CD4-positive, alpha-beta T cell (primary cell): ENCODE measurements at regions of chr6 and their contacts with region 1.

Region 1: GRCh38 chr6:106512048-106512967 is 117.0 kb downstream of the RTN4IP1 start:
- DNase-seq: peak; percentile 66 to 91 (median 72)
- ATAC-seq: peak; percentile 73
- H3K4me3 ChIP-seq: peak overlapping the region; percentile 99
- H3K4me3 Mint-ChIP-seq: peak overlapping the region; percentile 96
- H3K27ac ChIP-seq: peak overlapping the region; percentile 95 to 96
- H3K27ac Mint-ChIP-seq: peak overlapping the region; percentile 97
- H3K4me1 ChIP-seq: peaks cover 48% of the 10 kb centered on the region
- H3K4me1 Mint-ChIP-seq: peaks cover 55% of the 10 kb centered on the region
- H3K27me3 ChIP-seq: no peaks in the 10 kb centered on the region
- H3K27me3 Mint-ChIP-seq: peaks cover 12% of the 10 kb centered on the region
- CTCF ChIP-seq: peak; percentile 67

Region 2: DNA sequence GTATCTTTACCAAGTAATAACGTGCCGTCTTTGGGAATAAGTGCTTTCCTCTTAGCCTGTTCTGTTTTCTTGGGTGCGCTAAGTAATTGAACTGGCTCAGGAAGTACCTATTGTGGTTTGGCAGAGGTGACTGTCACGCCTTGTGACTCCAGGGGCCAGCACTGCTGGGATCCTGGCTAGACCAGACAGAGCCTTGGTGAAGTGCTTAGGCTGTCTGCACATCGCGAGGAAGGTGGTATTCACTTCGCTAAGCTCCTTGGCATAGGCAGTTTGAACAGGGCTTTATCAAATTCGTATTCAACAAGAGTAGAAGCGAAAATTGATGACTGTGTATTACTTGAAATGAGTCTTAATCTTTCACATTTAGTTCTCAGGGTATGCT is 408.6 kb before region 1 on chr6:
- CTCF ChIA-PET with region 1: no interaction called
- POLR2A ChIA-PET with region 1: no interaction called
- intact Hi-C with region 1: loop called in 1 of 2 experiments (anchors 10 kb)
- DNase-seq: peak in 13 of 14 experiments; percentile 20 to 86 (median 44)
- ATAC-seq: peak; percentile 62
- H3K4me3 ChIP-seq: peak overlapping the region; percentile 72
- H3K4me3 Mint-ChIP-seq: peak overlapping the region; percentile 90
- H3K27ac ChIP-seq: peak overlapping the region; percentile 19 to 52
- H3K27ac Mint-ChIP-seq: peak overlapping the region; percentile 95
- H3K4me1 ChIP-seq: peaks cover 59% of the 10 kb centered on the region
- H3K4me1 Mint-ChIP-seq: peaks cover 77% of the 10 kb centered on the region
- H3K27me3 ChIP-seq: no peaks in the 10 kb centered on the region
- H3K27me3 Mint-ChIP-seq: no peaks in the 10 kb centered on the region
- CTCF ChIP-seq: no peak

Region 3: DNA sequence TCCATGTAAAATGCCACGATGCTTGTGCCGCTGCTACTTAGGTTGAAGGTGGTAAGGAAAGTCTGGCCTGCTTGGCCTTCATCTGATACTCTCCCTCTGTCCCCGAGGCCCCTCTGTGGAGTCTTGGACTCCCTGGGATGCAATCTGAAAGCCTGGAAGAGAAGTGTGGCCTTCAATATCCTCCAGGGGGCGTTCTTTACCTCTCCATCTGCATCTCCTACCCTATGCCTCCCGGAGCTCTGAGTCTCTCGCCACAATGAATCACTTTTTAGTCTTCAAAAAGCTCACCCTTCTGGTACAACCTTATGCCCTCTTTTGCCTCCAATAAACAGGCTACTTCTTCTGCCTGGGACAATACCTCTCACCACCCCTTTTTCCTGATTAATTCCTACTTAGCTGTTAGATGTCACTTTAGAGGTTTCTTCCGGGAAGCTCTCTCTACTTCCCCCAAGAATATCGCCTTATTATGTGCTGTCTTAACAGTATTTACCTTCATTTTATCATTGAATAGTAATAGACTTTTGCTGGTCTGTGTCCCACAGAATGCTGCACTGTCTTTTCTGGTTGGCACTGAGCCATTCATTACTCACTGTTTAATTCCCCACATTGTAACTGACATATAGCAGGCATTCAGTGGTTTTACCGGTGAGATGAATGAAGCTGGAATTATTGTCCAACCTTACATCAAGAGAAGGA is 172.8 kb before region 1 on chr6:
- CTCF ChIA-PET with region 1: no interaction called
- POLR2A ChIA-PET with region 1: no interaction called
- intact Hi-C with region 1: loop called in 1 of 2 experiments (anchors 5 kb)
- DNase-seq: peak in 12 of 14 experiments; percentile 4 to 74 (median 32)
- ATAC-seq: peak; percentile 80
- H3K4me3 ChIP-seq: no peak overlapping the region
- H3K4me3 Mint-ChIP-seq: no peak overlapping the region
- H3K27ac ChIP-seq: no peak overlapping the region
- H3K27ac Mint-ChIP-seq: no peak overlapping the region
- H3K4me1 ChIP-seq: peaks cover 3% of the 10 kb centered on the region
- H3K4me1 Mint-ChIP-seq: no peaks in the 10 kb centered on the region
- H3K27me3 ChIP-seq: peaks cover 5 to 8% of the 10 kb centered on the region in 2 experiments
- H3K27me3 Mint-ChIP-seq: peaks cover 52% of the 10 kb centered on the region
- CTCF ChIP-seq: peak; percentile 73

Region 4: DNA sequence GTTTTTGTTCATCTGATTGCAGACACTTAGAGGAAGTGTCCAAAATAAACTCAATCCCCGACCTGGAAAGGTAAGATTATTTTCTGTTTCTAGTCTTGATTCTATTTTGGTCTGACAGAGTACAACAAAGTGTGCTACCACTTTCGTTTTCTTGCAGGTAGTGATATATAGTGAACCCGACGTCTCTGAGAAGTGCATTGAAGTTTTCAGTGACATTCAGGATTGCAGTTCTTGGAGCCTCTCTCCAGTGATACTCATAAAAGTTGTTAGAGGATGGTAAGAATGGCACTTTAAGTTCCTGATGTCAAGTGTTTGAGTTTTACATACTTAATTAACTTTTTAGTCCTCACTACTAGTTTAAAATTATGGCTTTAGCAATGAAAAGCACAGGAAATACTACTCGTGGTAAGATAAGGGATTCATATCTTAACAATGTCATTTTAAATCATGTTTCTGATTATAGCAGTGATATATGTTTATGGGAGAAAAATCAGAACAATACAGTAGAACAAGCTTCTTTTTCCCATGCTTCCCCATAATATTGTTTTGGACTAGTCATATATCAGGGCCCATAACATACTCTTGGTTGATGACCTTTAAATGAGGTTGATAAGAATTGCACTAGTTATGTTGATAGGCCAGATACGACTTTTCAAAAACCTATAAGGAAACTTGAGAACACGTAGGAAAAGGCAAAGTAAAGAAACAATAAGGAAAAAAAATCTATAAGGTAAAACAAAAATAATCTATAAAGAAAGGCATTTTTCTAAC is 13.0 kb after region 1 on chr6:
- CTCF ChIA-PET with region 1: interaction called, 89 read pairs
- POLR2A ChIA-PET with region 1: interaction called, 248 read pairs
- intact Hi-C with region 1: loop called (anchors 1 to 2 kb)
- DNase-seq: peak in 3 of 14 experiments; percentile 68 to 82 (median 69)
- ATAC-seq: peak; percentile 13
- H3K4me3 ChIP-seq: peak overlapping the region; percentile 60
- H3K4me3 Mint-ChIP-seq: peak overlapping the region; percentile 94
- H3K27ac ChIP-seq: peak overlapping the region; percentile 60 to 61
- H3K27ac Mint-ChIP-seq: peak overlapping the region; percentile 96
- H3K4me1 ChIP-seq: peaks cover 18% of the 10 kb centered on the region
- H3K4me1 Mint-ChIP-seq: peaks cover 77% of the 10 kb centered on the region
- H3K27me3 ChIP-seq: no peaks in the 10 kb centered on the region
- H3K27me3 Mint-ChIP-seq: no peaks in the 10 kb centered on the region
- CTCF ChIP-seq: no peak

Region 5: GRCh38 chr6:106539936-106540335 is 27.6 kb after region 1 on chr6:
- CTCF ChIA-PET with region 1: interaction called, 31 read pairs
- POLR2A ChIA-PET with region 1: interaction called, 21 read pairs
- intact Hi-C with region 1: no loop called
- DNase-seq: no peak
- ATAC-seq: no peak
- H3K4me3 ChIP-seq: no peak overlapping the region
- H3K4me3 Mint-ChIP-seq: no peak overlapping the region
- H3K27ac ChIP-seq: no peak overlapping the region
- H3K27ac Mint-ChIP-seq: peak overlapping the region; percentile 66
- H3K4me1 ChIP-seq: peaks cover 14% of the 10 kb centered on the region
- H3K4me1 Mint-ChIP-seq: peaks cover 59% of the 10 kb centered on the region
- H3K27me3 ChIP-seq: no peaks in the 10 kb centered on the region
- H3K27me3 Mint-ChIP-seq: no peaks in the 10 kb centered on the region
- CTCF ChIP-seq: no peak

Region 6: GRCh38 chr6:106568530-106568929 is 56.2 kb after region 1 on chr6:
- CTCF ChIA-PET with region 1: interaction called, 54 read pairs
- POLR2A ChIA-PET with region 1: interaction called, 11 read pairs
- intact Hi-C with region 1: no loop called
- DNase-seq: no peak
- ATAC-seq: no peak
- H3K4me3 ChIP-seq: no peak overlapping the region
- H3K4me3 Mint-ChIP-seq: no peak overlapping the region
- H3K27ac ChIP-seq: no peak overlapping the region
- H3K27ac Mint-ChIP-seq: no peak overlapping the region
- H3K4me1 ChIP-seq: no peaks in the 10 kb centered on the region
- H3K4me1 Mint-ChIP-seq: peaks cover 5% of the 10 kb centered on the region
- H3K27me3 ChIP-seq: no peaks in the 10 kb centered on the region
- H3K27me3 Mint-ChIP-seq: no peaks in the 10 kb centered on the region
- CTCF ChIP-seq: no peak

Region 7: DNA sequence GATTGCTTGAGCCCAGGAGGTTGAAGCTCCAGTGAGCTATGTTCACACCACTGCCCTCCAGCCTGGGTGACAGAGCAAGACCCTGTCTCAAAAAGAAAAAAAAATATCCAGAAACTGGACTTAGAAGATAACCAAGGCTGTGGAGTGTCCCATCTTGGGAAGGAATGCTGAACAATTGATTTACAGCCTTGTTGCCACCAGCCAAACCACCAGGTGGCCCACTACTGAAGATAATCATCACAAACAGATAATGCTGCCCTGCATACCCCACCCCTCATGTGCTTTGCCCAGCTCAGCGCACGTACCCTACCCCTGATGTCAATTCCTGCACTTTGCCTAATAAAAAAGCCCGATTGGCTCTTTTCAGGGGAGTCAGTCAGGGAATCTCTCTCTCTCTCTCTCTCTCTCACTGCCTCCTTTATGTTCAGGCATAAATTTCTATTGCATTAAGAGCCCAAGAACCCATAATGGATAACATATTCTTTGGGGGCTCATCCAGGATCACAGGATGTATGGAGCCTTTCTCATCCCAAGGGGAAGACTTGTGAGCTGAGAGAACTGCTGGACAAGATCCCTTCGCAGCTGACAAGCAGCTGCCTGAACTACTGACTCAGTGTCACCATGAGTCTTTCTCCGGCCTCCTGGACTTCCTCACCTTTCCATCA is 295.8 kb after region 1 on chr6:
- CTCF ChIA-PET with region 1: no interaction called
- POLR2A ChIA-PET with region 1: no interaction called
- intact Hi-C with region 1: no loop called
- DNase-seq: no peak
- ATAC-seq: no peak
- H3K4me3 ChIP-seq: no peak overlapping the region
- H3K4me3 Mint-ChIP-seq: no peak overlapping the region
- H3K27ac ChIP-seq: no peak overlapping the region
- H3K27ac Mint-ChIP-seq: no peak overlapping the region
- H3K4me1 ChIP-seq: no peaks in the 10 kb centered on the region
- H3K4me1 Mint-ChIP-seq: no peaks in the 10 kb centered on the region
- H3K27me3 ChIP-seq: peaks cover 0 to 3% of the 10 kb centered on the region in 2 experiments
- H3K27me3 Mint-ChIP-seq: no peaks in the 10 kb centered on the region
- CTCF ChIP-seq: no peak